Right ventricle myocardium superior (tissue), 1 donor: ENCODE measurements at regions of chr3 and their contacts with region 1.

Region 1: DNA sequence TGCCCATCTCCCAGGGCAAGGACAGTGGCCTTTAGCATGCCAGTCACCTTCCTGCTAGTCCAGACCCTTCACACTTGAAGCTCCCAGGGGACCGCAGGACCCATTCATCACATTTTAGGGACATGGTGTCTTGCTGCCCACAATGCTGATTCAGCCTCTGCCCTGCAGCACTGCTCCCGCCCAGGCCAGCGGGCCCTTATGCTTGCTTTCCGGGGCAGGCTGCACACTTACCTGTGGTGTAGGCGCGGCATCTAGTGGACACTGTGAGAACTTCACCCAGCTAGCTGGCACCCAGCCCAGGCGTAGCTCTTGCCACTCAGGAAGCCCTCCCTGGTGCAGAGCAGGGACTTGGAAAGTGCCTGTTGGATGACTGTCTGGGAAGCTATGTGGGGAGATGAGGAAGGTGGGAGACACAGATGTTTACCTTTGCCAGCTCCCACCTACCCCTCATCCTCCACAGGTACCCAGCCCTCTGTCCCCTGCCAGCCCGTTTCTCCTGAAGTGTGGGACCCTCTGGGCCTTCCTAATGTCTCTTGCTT is 26.2 kb upstream of the NR2C2 start:
- DNase-seq: peak; percentile 94
- ATAC-seq: peak; percentile 92

Region 2: GRCh38 chr3:14672588-14672987 is 248.6 kb before region 1 on chr3:
- intact Hi-C with region 1: loop called (anchors 2 kb)
- DNase-seq: no peak
- ATAC-seq: no peak

Region 3: GRCh38 chr3:14691239-14691638 is 229.9 kb before region 1 on chr3:
- intact Hi-C with region 1: no loop called
- DNase-seq: no peak
- ATAC-seq: no peak

Region 4: DNA sequence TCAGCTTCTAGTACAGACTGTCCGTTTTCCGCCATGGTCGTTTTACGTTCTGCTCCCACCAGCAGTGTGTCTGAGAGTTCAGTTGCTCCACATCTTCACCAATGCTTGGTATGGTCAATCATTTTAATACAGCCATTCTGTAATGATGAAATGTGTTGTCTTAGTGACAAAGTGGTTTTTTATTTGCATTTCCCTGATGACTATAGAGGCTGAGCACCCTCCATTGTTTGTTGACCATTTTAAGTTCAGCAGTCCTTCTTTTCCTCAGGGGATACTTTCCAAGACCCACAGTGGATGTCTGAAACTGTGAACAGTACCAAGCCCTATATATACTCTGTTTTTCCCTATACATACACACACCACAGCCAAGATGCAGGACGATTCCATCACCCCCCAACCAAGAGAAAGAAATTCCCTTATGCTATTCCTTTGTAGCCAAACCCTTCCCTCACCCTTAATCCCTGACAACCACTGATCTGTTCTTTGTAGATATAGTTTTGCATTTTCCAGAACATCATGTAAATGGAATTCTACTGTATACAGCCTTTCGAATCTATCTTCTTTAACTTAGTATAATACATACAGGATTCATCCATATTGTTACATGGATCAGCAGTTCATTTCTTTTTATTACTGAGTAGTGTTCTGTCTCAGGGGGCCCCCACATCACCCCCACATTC is 190.3 kb before region 1 on chr3:
- intact Hi-C with region 1: no loop called
- DNase-seq: no peak
- ATAC-seq: no peak

Region 5: DNA sequence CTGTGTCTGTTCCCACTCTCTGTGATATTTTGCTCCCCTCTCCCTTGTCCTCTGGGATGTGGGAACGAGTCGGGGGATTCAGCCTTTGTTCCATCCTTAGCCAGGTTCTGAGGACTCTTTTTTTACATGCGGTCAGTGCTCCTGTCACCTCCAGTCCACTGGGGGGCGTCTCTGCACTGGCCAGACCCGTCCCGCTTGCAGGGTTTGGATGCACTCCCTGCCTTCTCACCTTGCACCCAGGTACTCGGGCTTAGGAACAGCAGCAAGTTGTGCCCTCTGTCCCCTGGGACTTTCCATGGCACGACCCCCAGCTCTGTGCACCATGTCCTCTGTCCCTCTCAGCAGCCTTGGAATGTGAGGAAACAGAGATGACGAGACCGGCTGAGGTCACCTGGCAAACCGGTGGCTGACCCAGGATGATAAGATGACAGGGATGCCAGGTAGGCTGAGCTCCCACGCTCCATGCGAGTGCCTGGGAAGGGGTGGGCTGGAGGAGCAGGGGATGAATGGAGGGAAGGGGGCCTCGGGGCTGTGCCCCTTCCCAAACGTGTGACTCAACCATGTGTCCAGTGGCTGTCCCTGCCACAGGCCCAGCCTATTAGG is 129.7 kb before region 1 on chr3:
- intact Hi-C with region 1: loop called (anchors 5 kb)
- DNase-seq: peak; percentile 78
- ATAC-seq: peak; percentile 74

Region 6: GRCh38 chr3:15032650-15033049 is 111.5 kb after region 1 on chr3:
- intact Hi-C with region 1: loop called (anchors 5 kb)
- DNase-seq: no peak
- ATAC-seq: no peak

Region 7: GRCh38 chr3:15064835-15065549 is 143.8 kb after region 1 on chr3 and contains the start of gene MRPS25:
- intact Hi-C with region 1: no loop called
- DNase-seq: peak; percentile 96
- ATAC-seq: peak; percentile 97
- total RNA-seq, gene MRPS25: 152 TPM